Activated naive CD4-positive, alpha-beta T cell treated with anti-CD3 and anti-CD28 coated beads for 36 hours (primary cell): ENCODE measurements at regions of chr19 and their contacts with region 1.

Region 1: DNA sequence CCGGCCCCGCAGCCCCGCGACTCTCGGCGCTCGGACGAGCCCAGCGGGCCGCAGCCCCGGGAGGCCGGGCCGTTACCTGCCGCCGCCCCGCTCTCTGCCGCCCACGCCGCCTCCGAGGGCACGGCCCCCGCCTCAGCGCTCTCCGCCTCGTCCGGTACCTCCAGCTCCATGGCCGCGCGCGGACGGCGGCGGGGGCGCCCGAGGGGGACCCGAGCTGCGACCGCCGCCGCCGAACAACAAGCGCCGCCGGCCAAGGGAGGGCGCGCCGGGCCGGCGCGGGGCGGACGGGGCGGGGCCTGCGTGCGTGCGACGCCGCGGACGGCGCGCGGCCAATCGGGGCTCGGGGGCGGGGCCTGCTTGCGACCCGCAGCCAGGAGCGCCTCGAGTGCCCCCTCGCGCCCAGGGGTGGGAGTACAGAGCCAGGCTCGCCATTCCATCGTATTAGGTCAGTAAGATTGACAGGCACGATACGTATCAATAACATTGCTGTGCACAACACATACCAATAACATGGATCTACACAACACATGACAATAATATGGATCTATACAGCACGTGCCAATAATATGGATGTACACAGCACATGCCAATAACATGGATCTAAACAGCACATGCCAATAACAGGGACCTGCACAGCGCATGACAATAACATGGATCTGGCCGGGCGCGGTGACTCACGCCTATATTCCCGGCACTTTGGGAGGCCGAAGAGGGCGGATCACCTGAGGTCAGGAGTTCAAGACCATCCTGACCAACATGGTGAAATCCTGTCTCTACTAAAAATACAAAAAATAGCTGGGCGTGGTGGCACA is at the start of gene PIP5K1C:
- DNase-seq: peak; percentile 93
- H3K4me3 Mint-ChIP-seq: peak within 1 kb of the TSS; percentile 90
- H3K27ac Mint-ChIP-seq: peak within 1 kb of the TSS; percentile 50
- H3K4me1 Mint-ChIP-seq: peaks cover 23% of the 10 kb centered on the region
- H3K27me3 Mint-ChIP-seq: no peaks in the 10 kb centered on the region
- total RNA-seq, gene PIP5K1C: 7.3 to 7.5 TPM

Region 2: GRCh38 chr19:3586124-3586626 is 114.3 kb before region 1 on chr19:
- CTCF ChIA-PET with region 1: interaction called, 3 read pairs
- intact Hi-C with region 1: loop called (anchors 10 kb)
- DNase-seq: peak; percentile 34
- H3K4me3 Mint-ChIP-seq: peak overlapping the region; percentile 24
- H3K27ac Mint-ChIP-seq: no peak overlapping the region
- H3K4me1 Mint-ChIP-seq: no peaks in the 10 kb centered on the region
- H3K27me3 Mint-ChIP-seq: no peaks in the 10 kb centered on the region

Region 3: DNA sequence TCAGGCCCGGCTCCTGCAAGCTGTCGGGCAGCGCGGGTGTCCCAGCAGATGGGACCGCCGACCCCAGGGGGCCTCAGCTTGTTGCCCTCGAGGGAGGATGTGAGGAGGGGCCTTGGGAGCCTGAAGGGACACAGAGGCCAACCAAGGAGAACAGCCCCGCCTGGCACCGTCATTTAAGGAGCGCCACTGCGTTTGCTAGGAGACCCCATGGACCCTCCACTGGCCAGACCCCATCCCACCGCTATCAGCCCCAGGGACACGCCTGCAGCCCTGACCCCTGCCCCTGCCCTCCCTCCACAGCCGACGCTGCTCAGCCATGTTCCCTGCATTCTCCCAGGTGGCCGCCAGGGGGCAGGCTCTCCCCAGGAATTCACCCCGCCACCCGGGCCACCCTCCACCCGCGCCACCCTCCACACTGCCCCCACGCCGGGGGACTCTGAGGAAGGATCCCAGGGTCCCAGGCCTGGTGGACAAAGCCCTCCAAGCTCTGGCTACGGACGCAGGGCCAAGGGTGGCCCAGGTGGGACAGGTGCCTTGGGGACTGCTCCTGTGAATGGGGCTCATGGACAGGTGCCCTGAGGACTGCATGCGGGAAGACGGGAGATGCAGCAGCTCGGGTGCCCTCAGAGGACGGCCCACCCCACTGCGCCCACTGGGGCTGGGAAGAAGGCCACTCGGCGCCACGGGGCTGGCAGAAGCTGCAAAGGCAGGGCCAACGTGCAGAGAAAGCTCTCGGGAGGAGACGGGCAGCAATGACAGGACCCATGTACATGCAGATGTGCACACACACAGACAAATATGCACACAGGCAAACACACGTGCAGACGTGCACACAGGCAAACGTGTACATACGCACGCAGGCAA is 34.5 kb before region 1 on chr19:
- CTCF ChIA-PET with region 1: interaction called, 11 read pairs
- intact Hi-C with region 1: loop called (anchors 1 kb)
- DNase-seq: peak; percentile 80
- H3K4me3 Mint-ChIP-seq: no peak overlapping the region
- H3K27ac Mint-ChIP-seq: no peak overlapping the region
- H3K4me1 Mint-ChIP-seq: peaks cover 5% of the 10 kb centered on the region
- H3K27me3 Mint-ChIP-seq: no peaks in the 10 kb centered on the region